ENCODE measurements at regions of chrX and their contacts with region 1.

Region 1: DNA sequence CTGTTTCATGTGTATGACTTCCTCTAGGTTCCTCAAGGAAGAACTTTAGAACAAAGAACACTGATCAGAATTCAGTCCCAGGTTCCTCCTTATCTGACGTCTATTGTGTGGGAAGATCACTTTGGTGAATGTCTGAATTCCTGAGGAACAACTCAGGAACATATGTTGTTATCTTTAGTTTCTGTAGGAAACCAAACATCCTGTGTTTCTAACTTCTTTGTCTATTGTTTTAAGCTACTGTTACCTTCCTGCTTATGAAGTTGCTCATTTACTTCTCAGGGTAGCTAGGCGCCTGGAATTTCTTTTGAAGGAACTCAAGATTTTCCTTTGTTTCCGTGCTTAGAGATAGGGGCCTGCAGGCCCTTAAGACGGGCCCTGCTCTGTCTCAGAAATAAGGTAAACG is 46.2 kb downstream of the MAGEB5 start:
- DNase-seq: peak; percentile 91
- H3K4me3 ChIP-seq: no peak overlapping the region
- H3K27ac ChIP-seq: peak overlapping the region; percentile 99
- H3K4me1 ChIP-seq: peaks cover 23% of the 10 kb centered on the region
- H3K27me3 ChIP-seq: no peaks in the 10 kb centered on the region
- CTCF ChIP-seq: no peak
- POLR2A ChIP-seq: peak; percentile 41

Region 2: GRCh38 chrX:25721564-25721963 is 540.6 kb before region 1 on chrX:
- CTCF ChIA-PET with region 1: no interaction called
- POLR2A ChIA-PET with region 1: no interaction called
- dilution Hi-C with region 1: no loop called
- intact Hi-C with region 1: loop called (anchors 1 kb)
- DNase-seq: peak; percentile 40
- H3K4me3 ChIP-seq: no peak overlapping the region
- H3K27ac ChIP-seq: no peak overlapping the region
- H3K4me1 ChIP-seq: no peaks in the 10 kb centered on the region
- H3K27me3 ChIP-seq: no peaks in the 10 kb centered on the region
- CTCF ChIP-seq: peak; percentile 12 to 23
- POLR2A ChIP-seq: no peak

Region 3: GRCh38 chrX:25941087-25941486 is 321.0 kb before region 1 on chrX:
- CTCF ChIA-PET with region 1: no interaction called
- POLR2A ChIA-PET with region 1: no interaction called
- dilution Hi-C with region 1: no loop called
- intact Hi-C with region 1: loop called (anchors 1 kb)
- DNase-seq: peak; percentile 61
- H3K4me3 ChIP-seq: peak overlapping the region in 1 of 3 experiments; percentile 43
- H3K27ac ChIP-seq: peak overlapping the region; percentile 96
- H3K4me1 ChIP-seq: peaks cover 27% of the 10 kb centered on the region
- H3K27me3 ChIP-seq: no peaks in the 10 kb centered on the region
- CTCF ChIP-seq: no peak
- POLR2A ChIP-seq: no peak

Region 4: DNA sequence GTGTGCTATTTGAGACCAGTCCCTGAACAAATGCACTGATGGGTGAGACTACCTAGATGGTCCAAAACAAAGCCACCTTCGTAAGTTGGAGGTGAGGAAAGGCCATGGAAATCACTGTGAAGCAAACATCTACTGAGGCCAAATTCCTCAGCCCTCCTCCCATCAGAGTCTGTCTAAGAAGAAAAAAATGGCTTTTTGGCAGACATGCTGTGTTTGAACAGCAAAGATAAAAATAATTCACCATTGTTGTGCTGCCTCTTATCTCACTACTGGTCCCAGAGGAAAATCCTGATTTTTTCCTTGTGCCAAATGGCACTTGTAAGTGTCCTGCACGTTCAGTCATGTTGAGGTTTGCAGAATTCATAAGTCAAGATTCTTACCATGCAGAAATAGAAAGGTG is 116.1 kb before region 1 on chrX:
- CTCF ChIA-PET with region 1: no interaction called
- POLR2A ChIA-PET with region 1: no interaction called
- dilution Hi-C with region 1: no loop called
- intact Hi-C with region 1: no loop called
- DNase-seq: peak; percentile 41
- H3K4me3 ChIP-seq: no peak overlapping the region
- H3K27ac ChIP-seq: no peak overlapping the region
- H3K4me1 ChIP-seq: no peaks in the 10 kb centered on the region
- H3K27me3 ChIP-seq: no peaks in the 10 kb centered on the region
- CTCF ChIP-seq: no peak
- POLR2A ChIP-seq: no peak

Region 5: DNA sequence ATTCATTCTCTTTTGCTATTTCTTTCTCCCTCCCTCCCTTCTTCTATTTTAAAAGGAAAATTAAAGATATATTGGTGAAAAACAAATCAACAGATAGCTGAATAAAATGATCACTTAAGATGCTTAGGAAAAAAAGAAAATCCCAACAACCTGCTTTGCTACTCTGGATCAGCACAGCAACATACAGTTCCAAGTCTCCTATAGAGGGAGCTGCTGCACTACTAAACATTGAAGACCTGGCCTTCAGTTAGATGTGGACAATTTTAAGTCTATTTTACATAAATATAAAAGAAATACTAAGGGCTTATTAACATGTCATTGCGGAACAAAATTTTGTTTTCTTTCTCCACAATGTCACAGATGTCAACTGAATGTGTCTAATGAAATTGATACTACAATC is 180.2 kb after region 1 on chrX:
- CTCF ChIA-PET with region 1: no interaction called
- POLR2A ChIA-PET with region 1: no interaction called
- dilution Hi-C with region 1: no loop called
- intact Hi-C with region 1: loop called (anchors 10 kb)
- DNase-seq: peak; percentile 68
- H3K4me3 ChIP-seq: no peak overlapping the region
- H3K27ac ChIP-seq: no peak overlapping the region
- H3K4me1 ChIP-seq: no peaks in the 10 kb centered on the region
- H3K27me3 ChIP-seq: no peaks in the 10 kb centered on the region
- CTCF ChIP-seq: peak in 1 of 2 donors; percentile 39
- POLR2A ChIP-seq: no peak

Region 6: GRCh38 chrX:26918633-26919032 is 656.5 kb after region 1 on chrX:
- CTCF ChIA-PET with region 1: no interaction called
- POLR2A ChIA-PET with region 1: no interaction called
- dilution Hi-C with region 1: no loop called
- intact Hi-C with region 1: loop called (anchors 2 kb)
- DNase-seq: peak; percentile 31
- H3K4me3 ChIP-seq: no peak overlapping the region
- H3K27ac ChIP-seq: no peak overlapping the region
- H3K4me1 ChIP-seq: peaks cover 36% of the 10 kb centered on the region
- H3K27me3 ChIP-seq: no peaks in the 10 kb centered on the region
- CTCF ChIP-seq: peak; percentile 17 to 26
- POLR2A ChIP-seq: no peak

Region 7: DNA sequence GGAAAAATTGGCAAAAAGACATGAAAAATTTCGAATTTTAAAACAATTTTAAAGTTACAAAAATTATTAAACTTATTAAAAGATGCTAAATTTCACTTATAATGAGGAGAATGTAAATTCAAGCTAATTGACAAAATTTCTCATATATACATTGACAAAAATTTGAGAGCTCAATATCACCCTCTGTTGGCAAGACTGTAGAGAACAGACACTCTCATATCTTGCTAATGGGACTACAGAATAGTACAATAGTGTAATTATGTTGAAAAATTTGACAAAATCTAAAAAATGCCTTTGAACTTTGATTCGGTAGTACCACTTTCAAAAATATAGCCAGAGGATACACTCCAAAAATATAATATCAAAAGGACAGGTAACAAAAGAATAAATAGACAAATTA is 1357.9 kb after region 1 on chrX:
- CTCF ChIA-PET with region 1: no interaction called
- POLR2A ChIA-PET with region 1: no interaction called
- dilution Hi-C with region 1: no loop called
- intact Hi-C with region 1: loop called (anchors 5 kb)
- DNase-seq: peak; percentile 53
- H3K4me3 ChIP-seq: no peak overlapping the region
- H3K27ac ChIP-seq: peak overlapping the region; percentile 65
- H3K4me1 ChIP-seq: peaks cover 15% of the 10 kb centered on the region
- H3K27me3 ChIP-seq: no peaks in the 10 kb centered on the region
- CTCF ChIP-seq: peak; percentile 13 to 18
- POLR2A ChIP-seq: no peak